ENCODE measurements at regions of chr10 and their contacts with region 1.

Region 1: GRCh38 chr10:117216611-117217195 is 19.4 kb downstream of the KCNK18 start:
- DNase-seq: peak; percentile 54
- ATAC-seq: peak; percentile 84
- H3K4me3 ChIP-seq: peak overlapping the region; percentile 19 to 27
- H3K27ac ChIP-seq: peak overlapping the region; percentile 6; the same call in 1 of the 2 replicates
- H3K4me1 ChIP-seq: peaks cover 2 to 21% of the 10 kb centered on the region in 2 experiments; a peak in 2 of 4 replicates
- H3K27me3 ChIP-seq: peaks cover 6% of the 10 kb centered on the region; the same call in 1 of the 2 replicates
- CTCF ChIP-seq: peak; percentile 100
- POLR2A ChIP-seq: no peak
- RAD21 ChIP-seq: peak; percentile 99

Region 2: GRCh38 chr10:117204316-117204715 is 12.4 kb before region 1 on chr10:
- CTCF ChIA-PET with region 1: interaction called, 16 read pairs
- POLR2A ChIA-PET with region 1: interaction called, 4 read pairs
- RAD21 ChIA-PET with region 1: no interaction called
- intact Hi-C with region 1: no loop called
- DNase-seq: no peak
- ATAC-seq: no peak
- H3K4me3 ChIP-seq: no peak overlapping the region
- H3K27ac ChIP-seq: no peak overlapping the region
- H3K4me1 ChIP-seq: no peaks in the 10 kb centered on the region
- H3K27me3 ChIP-seq: no peaks in the 10 kb centered on the region
- CTCF ChIP-seq: no peak
- POLR2A ChIP-seq: no peak
- RAD21 ChIP-seq: no peak

Region 3: GRCh38 chr10:117226824-117227451 is 10.2 kb after region 1 on chr10:
- CTCF ChIA-PET with region 1: interaction called, 49 read pairs
- POLR2A ChIA-PET with region 1: no interaction called
- RAD21 ChIA-PET with region 1: no interaction called
- intact Hi-C with region 1: no loop called
- DNase-seq: peak; percentile 67
- ATAC-seq: peak; percentile 98
- H3K4me3 ChIP-seq: no peak overlapping the region
- H3K27ac ChIP-seq: no peak overlapping the region
- H3K4me1 ChIP-seq: peaks cover 0 to under 1% of the 10 kb centered on the region in 2 experiments; a peak in 1 of 4 replicates
- H3K27me3 ChIP-seq: peaks cover 28% of the 10 kb centered on the region; the same call in 1 of the 2 replicates
- CTCF ChIP-seq: peak; percentile 91 to 96 (median 91)
- POLR2A ChIP-seq: no peak
- RAD21 ChIP-seq: peak; percentile 91

Region 4: GRCh38 chr10:117320050-117320665 is 103.5 kb after region 1 on chr10:
- CTCF ChIA-PET with region 1: interaction called, 120 read pairs
- POLR2A ChIA-PET with region 1: no interaction called
- RAD21 ChIA-PET with region 1: interaction called, 13 to 15 read pairs
- intact Hi-C with region 1: loop called (anchors 1 kb)
- DNase-seq: no peak
- ATAC-seq: peak; percentile 84
- H3K4me3 ChIP-seq: no peak overlapping the region
- H3K27ac ChIP-seq: no peak overlapping the region
- H3K4me1 ChIP-seq: no peaks in the 10 kb centered on the region
- H3K27me3 ChIP-seq: no peaks in the 10 kb centered on the region
- CTCF ChIP-seq: peak; percentile 71 to 95 (median 83)
- POLR2A ChIP-seq: no peak
- RAD21 ChIP-seq: peak; percentile 77

Region 5: DNA sequence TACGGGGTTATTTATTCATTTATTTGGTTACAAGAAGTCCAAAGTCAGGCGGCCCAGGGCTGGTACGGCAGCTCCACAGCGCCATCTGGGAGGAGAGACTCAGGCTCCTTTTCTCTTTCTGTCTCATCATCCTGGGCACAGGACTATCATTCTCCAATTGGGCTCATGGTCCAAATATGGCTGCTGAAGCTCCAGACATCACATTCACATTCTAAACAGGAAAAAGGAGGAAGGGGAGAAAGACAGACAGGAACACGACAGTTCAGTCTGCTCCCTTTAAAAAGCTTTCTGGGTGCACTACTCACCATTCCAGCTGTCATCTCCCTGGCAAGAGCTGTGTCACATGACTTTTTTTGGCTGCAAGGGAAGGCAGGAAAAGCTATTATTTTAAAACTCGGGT is 232.9 kb after region 1 on chr10:
- CTCF ChIA-PET with region 1: interaction called, 77 read pairs
- POLR2A ChIA-PET with region 1: no interaction called
- RAD21 ChIA-PET with region 1: interaction called in 1 of 2 experiments, 7 read pairs
- intact Hi-C with region 1: loop called (anchors 1 kb)
- DNase-seq: peak; percentile 44
- ATAC-seq: peak; percentile 95
- H3K4me3 ChIP-seq: no peak overlapping the region
- H3K27ac ChIP-seq: no peak overlapping the region
- H3K4me1 ChIP-seq: no peaks in the 10 kb centered on the region
- H3K27me3 ChIP-seq: no peaks in the 10 kb centered on the region
- CTCF ChIP-seq: peak; percentile 86 to 96 (median 86)
- POLR2A ChIP-seq: no peak
- RAD21 ChIP-seq: peak; percentile 88

Region 6: DNA sequence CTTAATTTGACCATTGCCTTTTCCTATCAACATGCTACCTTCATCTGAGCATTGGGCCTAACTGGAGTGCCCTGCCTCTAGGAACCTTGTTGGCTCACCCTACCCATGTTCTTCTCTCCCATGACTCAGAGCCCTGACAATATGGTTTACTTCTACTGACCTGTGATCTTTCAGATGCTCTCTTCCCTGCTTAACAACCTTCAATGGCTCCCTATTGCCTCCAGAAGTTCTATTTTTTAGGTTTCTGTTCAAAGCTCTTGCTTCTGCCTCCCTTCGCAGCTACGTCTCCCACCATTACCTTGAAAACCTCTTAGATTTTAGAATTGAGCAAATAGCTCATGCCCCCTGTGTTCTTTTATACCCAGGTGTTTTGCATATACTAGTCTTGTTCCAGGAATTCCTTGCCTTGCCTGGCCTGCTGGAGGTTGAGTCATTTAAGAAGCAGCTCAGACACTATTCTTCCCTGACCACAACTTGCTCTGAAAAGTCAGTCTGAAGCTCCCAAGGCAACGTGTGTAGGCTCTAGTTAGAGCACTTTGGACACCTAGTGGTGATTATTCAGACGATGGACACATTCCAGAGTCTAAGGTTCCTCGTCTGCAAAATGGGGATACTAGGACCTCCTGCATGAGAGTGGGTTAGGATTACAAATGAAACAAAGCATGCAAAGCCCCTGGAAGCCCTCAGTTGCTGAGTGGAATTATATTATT is 261.4 kb after region 1 on chr10:
- CTCF ChIA-PET with region 1: interaction called, 10 read pairs
- POLR2A ChIA-PET with region 1: no interaction called
- RAD21 ChIA-PET with region 1: interaction called, 3 to 4 read pairs
- intact Hi-C with region 1: no loop called
- DNase-seq: peak; percentile 83
- ATAC-seq: peak; percentile 90
- H3K4me3 ChIP-seq: no peak overlapping the region
- H3K27ac ChIP-seq: no peak overlapping the region
- H3K4me1 ChIP-seq: peaks cover 0 to 10% of the 10 kb centered on the region in 2 experiments; a peak in 2 of 4 replicates
- H3K27me3 ChIP-seq: no peaks in the 10 kb centered on the region
- CTCF ChIP-seq: peak; percentile 55 to 81 (median 61)
- POLR2A ChIP-seq: no peak
- RAD21 ChIP-seq: peak; percentile 83

Region 7: DNA sequence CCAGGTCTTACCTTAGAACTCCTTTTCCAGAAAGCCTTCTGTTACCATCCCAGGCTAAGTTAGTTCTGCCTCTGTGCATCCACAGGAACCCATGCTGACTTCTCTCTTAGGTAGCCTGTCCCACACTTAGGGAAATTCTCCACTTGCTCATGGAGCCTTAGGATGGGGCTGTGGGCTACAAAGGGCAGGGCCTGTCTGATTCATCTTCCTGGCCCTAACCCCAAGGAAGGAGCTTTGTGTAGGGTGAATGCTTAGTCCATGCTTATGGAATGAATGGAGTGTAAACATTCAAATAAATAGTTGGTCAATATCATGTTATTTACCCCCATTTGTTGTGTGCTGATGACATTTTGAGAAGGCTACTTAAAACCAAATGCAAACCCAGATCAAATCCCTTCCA is 380.5 kb after region 1 on chr10:
- CTCF ChIA-PET with region 1: no interaction called
- POLR2A ChIA-PET with region 1: no interaction called
- RAD21 ChIA-PET with region 1: no interaction called
- intact Hi-C with region 1: no loop called
- DNase-seq: no peak
- ATAC-seq: no peak
- H3K4me3 ChIP-seq: no peak overlapping the region
- H3K27ac ChIP-seq: no peak overlapping the region
- H3K4me1 ChIP-seq: no peaks in the 10 kb centered on the region
- H3K27me3 ChIP-seq: peaks cover 48% of the 10 kb centered on the region
- CTCF ChIP-seq: no peak
- POLR2A ChIP-seq: no peak
- RAD21 ChIP-seq: no peak

Region 8: GRCh38 chr10:117635826-117636225 is 419.1 kb after region 1 on chr10:
- CTCF ChIA-PET with region 1: no interaction called
- POLR2A ChIA-PET with region 1: no interaction called
- RAD21 ChIA-PET with region 1: no interaction called
- intact Hi-C with region 1: no loop called
- DNase-seq: no peak
- ATAC-seq: no peak
- H3K4me3 ChIP-seq: no peak overlapping the region
- H3K27ac ChIP-seq: no peak overlapping the region
- H3K4me1 ChIP-seq: no peaks in the 10 kb centered on the region
- H3K27me3 ChIP-seq: peaks cover 48% of the 10 kb centered on the region
- CTCF ChIP-seq: no peak
- POLR2A ChIP-seq: no peak
- RAD21 ChIP-seq: no peak

Region 9: DNA sequence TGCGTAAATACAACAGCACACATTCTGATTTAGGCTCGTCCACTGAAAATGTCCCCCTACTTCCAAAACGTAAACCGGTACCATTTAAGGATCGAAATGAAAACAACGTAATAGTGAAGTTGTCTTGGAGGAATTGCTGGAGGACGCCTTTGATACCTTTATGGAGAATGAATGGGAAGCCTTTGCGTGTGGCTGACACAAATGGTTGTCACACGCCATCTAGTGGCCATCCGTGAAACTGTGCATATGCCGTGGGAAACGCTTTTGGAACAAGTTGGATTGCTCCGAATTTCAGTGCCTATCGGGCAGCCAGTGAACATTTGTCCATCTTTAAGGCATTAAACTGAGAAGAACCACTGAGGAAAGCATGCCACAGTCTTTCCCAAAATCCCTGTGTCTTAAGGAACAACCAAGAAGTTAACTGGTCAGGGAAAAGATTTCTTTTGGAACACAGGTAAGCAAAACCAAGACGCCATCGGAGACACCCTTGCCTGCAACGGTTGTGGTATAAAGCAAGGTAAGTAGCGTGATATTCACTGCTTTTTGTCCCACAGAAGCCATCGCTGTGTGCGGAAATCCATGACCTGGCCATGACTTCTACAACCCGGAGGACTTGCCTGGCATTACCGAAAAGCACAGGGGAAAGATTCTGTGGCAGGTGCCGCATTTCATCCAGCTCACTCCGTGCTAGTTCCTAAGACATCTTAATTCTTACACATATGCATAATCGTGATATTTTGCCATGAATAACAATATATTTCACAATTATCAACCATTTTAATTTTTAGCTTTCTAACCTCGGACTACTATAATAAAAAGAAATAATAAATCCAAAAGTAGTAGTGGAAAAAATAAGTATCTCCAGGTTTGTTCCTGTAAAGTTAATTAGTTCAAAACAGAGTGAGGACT is 1024.8 kb after region 1 on chr10:
- CTCF ChIA-PET with region 1: interaction called, 3 read pairs
- POLR2A ChIA-PET with region 1: no interaction called
- RAD21 ChIA-PET with region 1: no interaction called
- intact Hi-C with region 1: loop called (anchors 1 kb)
- DNase-seq: peak; percentile 81
- ATAC-seq: peak; percentile 88
- H3K4me3 ChIP-seq: no peak overlapping the region
- H3K27ac ChIP-seq: no peak overlapping the region
- H3K4me1 ChIP-seq: no peaks in the 10 kb centered on the region
- H3K27me3 ChIP-seq: peaks cover 81% of the 10 kb centered on the region
- CTCF ChIP-seq: peak; percentile 92 to 99 (median 98)
- POLR2A ChIP-seq: no peak
- RAD21 ChIP-seq: peak; percentile 98

Measured in HCT116 (cell line).